Cardiac septum (tissue), 1 donor: ENCODE measurements at regions of chr15 and their contacts with region 1.

Region 1: GRCh38 chr15:71364117-71364584 is 248.9 kb downstream of the THSD4 start:
- DNase-seq: no peak

Region 2: GRCh38 chr15:71294886-71295638 is 69.1 kb before region 1 on chr15:
- intact Hi-C with region 1: loop called (anchors 5 kb)
- DNase-seq: no peak